Posterior cingulate gyrus (tissue), 11 donors: ENCODE measurements at regions of chr11 and their contacts with region 1.

Region 1: DNA sequence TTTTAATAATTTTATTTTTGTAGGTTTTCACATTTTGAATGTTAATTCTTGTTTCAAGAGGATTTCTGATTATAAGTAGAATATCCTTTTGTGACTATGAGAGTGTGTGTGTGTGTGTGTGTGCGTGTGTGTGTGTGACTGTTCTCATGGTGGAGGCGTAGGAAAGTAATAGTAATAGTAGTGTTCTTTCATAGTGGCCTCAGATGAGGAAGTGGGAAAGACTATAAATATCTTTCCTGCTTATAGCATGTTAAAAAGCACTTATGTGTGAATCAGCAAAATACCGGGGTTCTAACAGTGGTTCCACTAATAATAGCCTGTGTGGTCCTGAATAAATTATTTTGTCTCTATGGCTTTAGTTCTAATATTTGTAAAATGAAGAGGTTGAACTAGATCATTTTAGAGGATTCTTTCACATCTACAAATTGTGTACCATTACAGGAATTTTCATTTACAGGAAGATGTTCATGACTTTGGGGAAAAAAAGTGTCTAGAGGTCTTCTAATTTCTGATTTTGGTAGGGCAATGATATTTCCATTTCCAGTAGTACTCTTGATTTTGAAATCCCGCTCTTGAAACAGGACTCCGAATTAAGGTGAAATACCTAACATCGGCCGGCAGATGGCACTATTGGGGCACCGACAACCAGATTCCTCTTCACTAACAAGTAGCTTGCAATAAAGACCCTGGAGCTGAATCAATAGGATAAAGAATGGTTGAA is 29.9 kb upstream of the OR10G7 start:
- DNase-seq: peak; percentile 59 to 97 (median 79)

Region 2: GRCh38 chr11:123806249-123806648 is 264.8 kb before region 1 on chr11 and contains the start of gene OR6M1:
- intact Hi-C with region 1: no loop called
- DNase-seq: no peak

Region 3: DNA sequence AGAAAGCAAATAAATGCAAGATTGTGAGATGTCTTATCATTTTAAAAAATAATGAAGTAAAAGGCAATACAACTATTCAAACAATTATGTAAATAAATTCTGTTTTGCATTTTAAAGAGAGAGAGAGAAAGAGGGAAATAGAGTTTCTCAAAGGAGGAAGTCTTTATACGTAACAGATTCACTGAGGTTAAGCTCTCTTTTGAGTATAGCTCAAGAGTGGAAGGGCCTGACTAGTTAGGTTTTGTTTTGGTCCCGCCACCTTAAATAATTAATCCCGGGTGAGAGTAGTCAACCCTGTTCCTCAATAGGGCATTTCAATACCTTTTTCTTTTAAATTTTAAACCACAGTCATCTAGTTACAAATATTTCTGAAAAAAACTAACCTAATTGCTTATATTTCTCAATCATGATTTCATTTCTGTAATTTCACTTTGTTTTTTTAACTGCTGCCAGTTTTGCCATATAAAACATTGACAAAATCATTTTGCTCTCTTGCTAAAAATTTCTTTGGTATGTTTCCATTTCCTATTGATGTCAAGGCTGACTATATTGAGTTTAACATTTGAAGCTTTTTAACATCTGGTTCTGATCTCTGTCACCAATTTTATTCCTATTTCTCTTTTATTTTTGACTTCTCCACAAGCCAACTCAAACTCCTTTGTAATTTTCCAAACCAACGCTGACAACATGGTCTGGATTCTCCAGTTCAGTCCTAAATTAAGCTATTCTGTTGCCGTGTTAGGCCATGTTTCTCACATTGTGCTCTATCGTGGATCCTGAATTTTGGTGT is 122.3 kb after region 1 on chr11:
- intact Hi-C with region 1: loop called (anchors 5 kb)
- DNase-seq: no peak

Region 4: DNA sequence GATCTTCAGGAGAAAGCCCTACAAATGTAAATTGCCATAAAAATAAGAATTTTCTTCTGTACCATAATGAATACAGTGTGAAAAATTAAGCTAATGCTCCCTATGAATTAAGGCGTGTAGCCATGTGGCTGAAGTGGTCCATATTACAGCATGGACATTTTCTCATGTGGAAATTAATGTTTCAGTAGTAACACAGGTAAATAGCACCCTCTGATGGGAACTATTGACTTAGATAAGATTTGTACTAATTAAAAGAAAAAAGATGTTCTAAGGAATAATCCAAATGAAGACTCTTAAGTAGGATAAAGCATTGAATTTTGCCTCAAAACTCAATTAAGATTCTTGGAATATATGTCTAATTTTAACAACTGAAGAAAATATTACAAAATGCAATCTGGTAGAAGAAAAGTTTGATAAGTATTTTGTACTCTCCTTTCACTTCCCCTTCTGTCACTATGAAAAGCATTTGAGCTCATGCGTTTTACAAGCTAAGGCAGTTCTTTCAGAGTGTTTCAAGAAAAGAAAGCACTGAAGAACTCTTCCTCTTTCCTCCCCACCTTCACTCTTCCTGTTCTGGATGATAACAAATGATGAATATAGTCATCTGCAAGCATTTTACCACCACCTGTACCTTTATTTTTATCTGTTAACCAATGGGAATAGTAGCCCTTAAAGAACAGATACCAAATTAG is 258.9 kb after region 1 on chr11:
- intact Hi-C with region 1: loop called (anchors 5 kb)
- DNase-seq: no peak

Region 5: GRCh38 chr11:124586238-124586860 is 515.3 kb after region 1 on chr11:
- intact Hi-C with region 1: loop called (anchors 10 kb)
- DNase-seq: peak in 9 of 10 donors; percentile 19 to 94 (median 62)